Endothelial cell of umbilical vein (primary cell): ENCODE measurements at regions of chr3 and their contacts with region 1.

Region 1: GRCh38 chr3:194296454-194297263 is 54.5 kb downstream of the CPN2 start:
- DNase-seq: peak; percentile 82
- H3K4me3 ChIP-seq: peak overlapping the region in 2 of 3 experiments; percentile 2 to 13
- H3K27ac ChIP-seq: peak overlapping the region; percentile 90
- H3K4me1 ChIP-seq: peaks cover 13% of the 10 kb centered on the region
- H3K27me3 ChIP-seq: no peaks in the 10 kb centered on the region
- CTCF ChIP-seq: no peak
- POLR2A ChIP-seq: no peak

Region 2: DNA sequence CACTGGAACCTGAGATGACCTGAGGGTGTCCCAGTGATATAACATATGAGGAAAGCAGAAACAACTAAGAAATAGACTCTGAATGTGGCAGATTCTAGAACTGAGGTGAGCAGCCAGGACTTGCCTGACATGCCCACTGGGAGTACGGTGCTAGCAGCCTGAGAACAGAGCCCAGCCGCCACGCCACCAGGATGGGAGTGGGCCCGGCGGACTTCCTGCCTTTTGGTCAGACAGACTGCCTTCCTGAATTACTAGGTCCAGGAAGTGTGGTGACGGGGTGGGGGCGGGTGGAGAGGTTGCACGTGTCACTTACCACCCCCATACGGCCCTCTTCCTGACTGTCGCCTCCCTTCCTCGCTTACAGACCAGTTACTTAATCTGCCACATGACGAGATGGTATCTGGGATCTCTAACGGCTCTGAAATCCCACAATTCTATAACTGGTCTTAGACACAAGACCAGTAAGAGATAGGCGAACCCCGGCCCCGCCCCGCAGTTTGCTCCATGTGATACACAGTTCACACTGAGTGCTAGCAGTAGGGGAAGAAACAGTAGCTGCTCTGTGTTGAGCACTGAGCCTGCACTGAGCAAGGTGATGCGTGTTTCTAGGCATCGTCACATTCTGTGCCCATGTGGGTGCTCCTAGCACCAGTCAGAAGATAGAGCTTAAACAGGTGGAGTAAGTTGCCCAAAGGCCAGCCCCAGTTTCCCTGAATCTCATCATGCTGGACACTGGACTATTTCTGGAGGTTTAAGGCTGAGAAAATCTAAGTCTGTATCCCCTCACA is 41.2 kb before region 1 on chr3:
- CTCF ChIA-PET with region 1: no interaction called
- POLR2A ChIA-PET with region 1: no interaction called
- dilution Hi-C with region 1: no loop called
- intact Hi-C with region 1: loop called (anchors 1 kb)
- DNase-seq: peak; percentile 94
- H3K4me3 ChIP-seq: no peak overlapping the region
- H3K27ac ChIP-seq: peak overlapping the region; percentile 85
- H3K4me1 ChIP-seq: peaks cover 14% of the 10 kb centered on the region
- H3K27me3 ChIP-seq: no peaks in the 10 kb centered on the region
- CTCF ChIP-seq: peak in 1 of 2 donors; percentile 6
- POLR2A ChIP-seq: no peak

Region 3: DNA sequence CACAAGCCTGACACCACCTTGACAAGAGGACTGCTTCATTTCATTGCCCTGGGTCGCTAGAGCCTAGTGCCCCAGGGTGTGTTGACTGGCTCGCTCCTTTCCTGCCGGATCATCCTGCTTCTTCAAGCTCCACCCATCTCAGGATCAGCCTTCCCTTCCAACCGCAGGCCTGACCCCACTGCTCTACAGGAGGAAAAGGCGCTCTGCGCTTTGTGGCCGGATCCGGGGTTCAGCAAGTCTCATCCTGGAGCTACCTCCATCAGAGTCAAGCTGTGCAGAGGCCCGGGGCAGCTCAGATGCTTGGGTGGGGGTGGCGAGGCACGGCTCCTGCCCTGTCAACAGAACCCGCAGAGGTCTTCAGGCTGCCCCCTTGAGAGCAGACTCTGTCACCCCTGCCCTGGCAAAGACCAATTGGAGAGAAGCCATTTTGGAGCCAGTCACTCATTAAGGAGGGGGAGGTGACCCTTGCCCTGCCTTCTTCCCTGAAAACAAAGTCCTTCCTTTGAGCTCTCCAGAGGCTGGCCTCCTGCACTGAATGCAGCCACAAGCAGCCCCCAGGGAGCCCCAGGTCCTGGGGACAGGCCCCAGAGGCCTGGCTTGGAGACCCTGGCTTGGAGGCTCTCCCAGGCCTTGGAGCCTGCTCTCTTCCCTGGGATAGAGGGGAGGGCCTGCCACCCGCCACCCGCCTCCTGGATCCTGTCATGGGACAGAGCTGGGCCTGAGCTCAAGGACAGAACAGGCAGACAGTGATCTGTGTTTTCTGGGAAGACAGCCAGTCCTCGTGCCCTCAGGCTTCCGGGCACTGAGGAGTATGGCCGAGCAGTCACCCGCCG is 25.8 kb before region 1 on chr3:
- CTCF ChIA-PET with region 1: interaction called, 14 read pairs
- POLR2A ChIA-PET with region 1: interaction called, 6 read pairs
- dilution Hi-C with region 1: no loop called
- intact Hi-C with region 1: loop called (anchors 1 kb)
- DNase-seq: peak; percentile 87
- H3K4me3 ChIP-seq: no peak overlapping the region
- H3K27ac ChIP-seq: peak overlapping the region; percentile 85
- H3K4me1 ChIP-seq: peaks cover 55% of the 10 kb centered on the region
- H3K27me3 ChIP-seq: no peaks in the 10 kb centered on the region
- CTCF ChIP-seq: no peak
- POLR2A ChIP-seq: no peak

Region 4: GRCh38 chr3:194285024-194285849 is 11.4 kb before region 1 on chr3:
- CTCF ChIA-PET with region 1: interaction called, 19 read pairs
- POLR2A ChIA-PET with region 1: no interaction called
- dilution Hi-C with region 1: no loop called
- intact Hi-C with region 1: no loop called
- DNase-seq: no peak
- H3K4me3 ChIP-seq: no peak overlapping the region
- H3K27ac ChIP-seq: no peak overlapping the region
- H3K4me1 ChIP-seq: no peaks in the 10 kb centered on the region
- H3K27me3 ChIP-seq: peaks cover 0 to 2% of the 10 kb centered on the region in 2 experiments
- CTCF ChIP-seq: no peak
- POLR2A ChIP-seq: no peak